ENCODE measurements at regions of chr1 and their contacts with region 1.

Region 1: DNA sequence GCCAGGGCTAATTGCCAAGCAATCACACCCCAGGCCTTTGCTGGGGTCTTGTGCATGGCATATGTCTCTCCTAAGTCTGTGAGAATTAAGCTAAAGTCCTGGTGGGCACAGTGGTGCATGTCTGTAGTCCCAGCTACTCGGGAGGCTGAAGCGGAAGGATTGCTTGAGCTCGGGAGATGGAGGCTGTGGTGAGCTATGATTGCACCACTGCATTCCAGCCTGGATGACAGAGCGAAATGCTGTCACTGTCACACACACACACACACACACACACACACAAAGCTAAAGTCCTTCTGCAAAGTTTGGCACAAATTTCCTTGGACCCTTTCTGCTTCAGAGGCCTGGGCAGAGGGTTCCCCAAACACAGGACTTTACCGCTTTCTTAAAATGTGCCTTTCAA is 31.3 kb upstream of the DNAJC11 start:
- DNase-seq: no peak
- ATAC-seq: no peak
- H3K4me3 ChIP-seq: no peak overlapping the region
- H3K27ac ChIP-seq: no peak overlapping the region
- H3K4me1 ChIP-seq: no peaks in the 10 kb centered on the region
- H3K27me3 ChIP-seq: no peaks in the 10 kb centered on the region
- CTCF ChIP-seq: no peak

Region 2: GRCh38 chr1:6935361-6935883 is 202.5 kb after region 1 on chr1:
- CTCF ChIA-PET with region 1: no interaction called
- POLR2A ChIA-PET with region 1: no interaction called
- in situ Hi-C with region 1: no loop called
- intact Hi-C with region 1: no loop called
- DNase-seq: no peak
- ATAC-seq: no peak
- H3K4me3 ChIP-seq: no peak overlapping the region
- H3K27ac ChIP-seq: no peak overlapping the region
- H3K4me1 ChIP-seq: 0 out of 2 replicates have a peak, but pooled peaks cover 2% of the 10 kb centered on the region
- H3K27me3 ChIP-seq: peaks cover 12% of the 10 kb centered on the region
- CTCF ChIP-seq: no peak

Region 3: DNA sequence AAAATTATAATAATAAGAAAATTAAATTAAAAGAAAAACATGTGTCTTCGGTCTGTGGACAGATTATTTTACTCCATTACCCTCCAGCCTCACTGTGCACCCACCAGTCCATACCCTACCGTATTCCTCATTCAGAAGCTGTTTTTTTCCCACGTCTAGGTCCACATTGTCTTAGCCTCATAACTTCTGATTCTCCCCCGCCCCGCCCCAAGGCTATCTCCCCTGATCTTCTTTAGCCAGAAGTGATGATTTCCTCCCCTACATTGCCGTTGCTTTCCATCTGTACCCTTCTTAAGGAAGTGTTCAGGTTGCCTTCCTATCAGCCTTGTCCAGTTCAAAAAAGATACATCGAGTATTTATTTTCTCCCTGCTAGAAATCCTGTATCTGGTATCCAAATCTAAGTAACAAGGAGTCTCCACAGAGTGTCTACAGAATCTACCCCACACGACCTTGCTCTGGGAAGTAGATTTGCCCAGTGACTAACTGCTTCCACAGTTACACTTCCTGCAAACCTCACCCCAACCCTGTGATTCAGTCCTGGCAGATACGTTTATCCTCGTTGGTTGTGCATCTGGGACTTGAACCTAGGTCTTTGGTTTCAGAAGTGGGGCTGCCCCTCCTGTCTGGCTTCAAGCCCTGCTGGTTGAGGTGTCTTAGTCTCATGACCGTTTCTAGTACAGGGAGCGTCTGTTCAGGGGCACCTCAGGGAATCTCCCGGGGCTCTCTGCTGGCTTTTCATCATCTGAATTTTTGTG is 522.5 kb after region 1 on chr1:
- CTCF ChIA-PET with region 1: interaction called, 15 read pairs
- POLR2A ChIA-PET with region 1: no interaction called
- in situ Hi-C with region 1: no loop called
- intact Hi-C with region 1: no loop called
- DNase-seq: no peak
- ATAC-seq: no peak
- H3K4me3 ChIP-seq: no peak overlapping the region
- H3K27ac ChIP-seq: no peak overlapping the region
- H3K4me1 ChIP-seq: no peaks in the 10 kb centered on the region
- H3K27me3 ChIP-seq: no peaks in the 10 kb centered on the region
- CTCF ChIP-seq: no peak